ENCODE measurements at regions of chr2 and their contacts with region 1.

Region 1: GRCh38 chr2:61016808-61017555 is 538 bp upstream of the PEX13 start:
- DNase-seq: peak; percentile 83
- H3K4me3 Mint-ChIP-seq: peak overlapping the region; percentile 94
- H3K27ac Mint-ChIP-seq: peak overlapping the region; percentile 96
- H3K4me1 Mint-ChIP-seq: peaks cover 35% of the 10 kb centered on the region
- H3K27me3 Mint-ChIP-seq: no peaks in the 10 kb centered on the region

Region 2: DNA sequence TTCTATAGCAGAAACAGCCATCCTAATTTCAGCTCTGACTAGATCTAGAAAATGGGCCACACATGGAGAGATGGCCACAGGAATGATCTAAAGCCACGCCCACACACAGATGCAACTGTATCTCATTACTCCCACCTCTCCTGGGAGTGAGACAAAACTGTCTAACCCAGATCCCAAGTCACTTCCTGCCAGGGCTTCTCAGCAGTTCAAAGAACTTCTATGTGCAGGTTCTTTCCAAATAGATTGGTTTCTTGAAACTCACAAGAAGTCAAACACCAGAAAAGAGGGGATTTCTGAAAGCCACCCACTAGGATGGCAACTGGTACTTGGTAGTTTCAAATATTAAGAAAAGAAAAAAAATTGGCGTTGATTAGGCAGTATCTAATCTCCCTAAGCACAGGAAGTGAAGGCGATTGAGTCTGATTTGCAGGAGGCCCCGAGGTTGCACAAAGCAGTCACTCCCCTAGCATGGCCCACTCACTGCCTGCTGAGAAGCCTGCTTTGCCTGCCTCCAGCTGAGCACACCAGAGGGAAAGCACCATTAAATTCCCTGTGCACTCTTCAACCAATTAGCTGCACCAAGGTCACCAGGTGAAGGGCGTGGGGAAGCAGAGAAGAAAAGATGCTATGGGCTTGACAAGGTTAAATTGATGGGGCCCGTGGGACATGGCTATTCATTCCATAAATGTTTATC is 209.8 kb before region 1 on chr2:
- CTCF ChIA-PET with region 1: no interaction called
- POLR2A ChIA-PET with region 1: no interaction called
- intact Hi-C with region 1: loop called (anchors 5 kb)
- DNase-seq: peak; percentile 81
- H3K4me3 Mint-ChIP-seq: peak overlapping the region; percentile 36
- H3K27ac Mint-ChIP-seq: peak overlapping the region; percentile 88
- H3K4me1 Mint-ChIP-seq: peaks cover 49% of the 10 kb centered on the region
- H3K27me3 Mint-ChIP-seq: no peaks in the 10 kb centered on the region

Region 3: GRCh38 chr2:60873381-60873780 is 143.6 kb before region 1 on chr2:
- CTCF ChIA-PET with region 1: no interaction called
- POLR2A ChIA-PET with region 1: no interaction called
- intact Hi-C with region 1: loop called (anchors 2 kb)
- DNase-seq: peak; percentile 36
- H3K4me3 Mint-ChIP-seq: peak overlapping the region; percentile 29
- H3K27ac Mint-ChIP-seq: peak overlapping the region; percentile 90
- H3K4me1 Mint-ChIP-seq: peaks cover 29% of the 10 kb centered on the region
- H3K27me3 Mint-ChIP-seq: no peaks in the 10 kb centered on the region

Region 4: GRCh38 chr2:60976875-60977561 is 40.0 kb before region 1 on chr2:
- CTCF ChIA-PET with region 1: no interaction called
- POLR2A ChIA-PET with region 1: no interaction called
- intact Hi-C with region 1: loop called (anchors 1 kb)
- DNase-seq: peak; percentile 29
- H3K4me3 Mint-ChIP-seq: no peak overlapping the region
- H3K27ac Mint-ChIP-seq: peak overlapping the region; percentile 35
- H3K4me1 Mint-ChIP-seq: peaks cover 30% of the 10 kb centered on the region
- H3K27me3 Mint-ChIP-seq: no peaks in the 10 kb centered on the region

Region 5: GRCh38 chr2:61100801-61101200 is 83.8 kb after region 1 on chr2:
- CTCF ChIA-PET with region 1: no interaction called
- POLR2A ChIA-PET with region 1: no interaction called
- intact Hi-C with region 1: no loop called
- DNase-seq: no peak
- H3K4me3 Mint-ChIP-seq: no peak overlapping the region
- H3K27ac Mint-ChIP-seq: no peak overlapping the region
- H3K4me1 Mint-ChIP-seq: no peaks in the 10 kb centered on the region
- H3K27me3 Mint-ChIP-seq: no peaks in the 10 kb centered on the region

Region 6: GRCh38 chr2:61144697-61145268 is 127.8 kb after region 1 on chr2:
- CTCF ChIA-PET with region 1: no interaction called
- POLR2A ChIA-PET with region 1: interaction called, 5 read pairs
- intact Hi-C with region 1: loop called (anchors 2 kb)
- DNase-seq: peak; percentile 96
- H3K4me3 Mint-ChIP-seq: peak overlapping the region; percentile 91
- H3K27ac Mint-ChIP-seq: peak overlapping the region; percentile 85
- H3K4me1 Mint-ChIP-seq: peaks cover 3% of the 10 kb centered on the region
- H3K27me3 Mint-ChIP-seq: peaks cover 1% of the 10 kb centered on the region

Region 7: DNA sequence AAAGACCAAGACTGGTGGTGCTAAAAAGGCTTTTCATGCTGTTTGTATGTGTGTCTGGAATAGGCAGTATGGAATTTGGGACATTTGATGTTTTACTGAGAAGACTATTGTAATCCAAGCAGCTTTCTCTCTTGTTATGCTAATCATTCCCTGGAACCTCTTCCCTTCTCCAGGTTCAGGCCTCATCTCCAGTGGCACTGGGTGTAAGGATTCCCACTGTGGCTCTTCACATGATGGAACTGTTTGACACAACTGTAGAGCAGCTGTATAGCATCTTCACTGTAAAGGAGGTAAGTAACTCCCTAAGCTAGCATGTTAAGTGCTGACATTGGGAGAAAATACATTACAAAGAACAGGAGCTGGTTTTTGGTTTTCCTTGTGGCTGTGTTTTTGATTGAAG is 168.3 kb after region 1 on chr2:
- CTCF ChIA-PET with region 1: no interaction called
- POLR2A ChIA-PET with region 1: no interaction called
- intact Hi-C with region 1: no loop called
- DNase-seq: no peak
- H3K4me3 Mint-ChIP-seq: no peak overlapping the region
- H3K27ac Mint-ChIP-seq: peak overlapping the region; percentile 8
- H3K4me1 Mint-ChIP-seq: peaks cover 38% of the 10 kb centered on the region
- H3K27me3 Mint-ChIP-seq: no peaks in the 10 kb centered on the region

Measured in activated CD4-positive, alpha-beta memory T cell treated with anti-CD3 and anti-CD28 coated beads for 36 hours (primary cell).